PC-9 (cell line): ENCODE measurements at regions of chr1 and their contacts with region 1.

Region 1: DNA sequence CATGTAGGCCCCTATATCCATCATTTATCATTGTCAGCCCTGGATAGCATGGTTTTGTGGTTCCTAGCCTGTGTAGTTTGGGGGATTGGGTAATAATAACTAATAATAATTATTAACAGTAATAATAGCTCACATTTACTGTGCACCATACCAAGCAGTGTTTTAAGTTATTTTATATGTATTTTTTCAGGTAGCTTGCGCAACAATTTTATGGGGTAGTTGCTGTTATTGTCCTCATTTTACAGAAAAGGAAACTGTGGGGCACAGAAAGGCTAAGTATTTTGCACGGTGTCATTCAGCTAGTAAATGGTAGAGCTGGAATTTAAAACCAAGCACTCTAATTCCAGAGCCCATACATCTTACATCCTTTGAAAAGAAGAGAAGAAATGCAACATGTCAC is 179.8 kb downstream of the HS2ST1 start:
- DNase-seq: no peak
- H3K4me3 ChIP-seq: no peak overlapping the region
- H3K27ac ChIP-seq: no peak overlapping the region
- H3K4me1 ChIP-seq: peaks cover 21% of the 10 kb centered on the region
- H3K27me3 ChIP-seq: no peaks in the 10 kb centered on the region
- CTCF ChIP-seq: no peak

Region 2: GRCh38 chr1:86798608-86799291 is 295.5 kb before region 1 on chr1:
- CTCF ChIA-PET with region 1: no interaction called
- POLR2A ChIA-PET with region 1: no interaction called
- intact Hi-C with region 1: no loop called
- DNase-seq: no peak
- H3K4me3 ChIP-seq: no peak overlapping the region
- H3K27ac ChIP-seq: no peak overlapping the region
- H3K4me1 ChIP-seq: peaks cover 3% of the 10 kb centered on the region; the same call in 1 of the 2 replicates
- H3K27me3 ChIP-seq: no peaks in the 10 kb centered on the region
- CTCF ChIP-seq: no peak

Region 3: DNA sequence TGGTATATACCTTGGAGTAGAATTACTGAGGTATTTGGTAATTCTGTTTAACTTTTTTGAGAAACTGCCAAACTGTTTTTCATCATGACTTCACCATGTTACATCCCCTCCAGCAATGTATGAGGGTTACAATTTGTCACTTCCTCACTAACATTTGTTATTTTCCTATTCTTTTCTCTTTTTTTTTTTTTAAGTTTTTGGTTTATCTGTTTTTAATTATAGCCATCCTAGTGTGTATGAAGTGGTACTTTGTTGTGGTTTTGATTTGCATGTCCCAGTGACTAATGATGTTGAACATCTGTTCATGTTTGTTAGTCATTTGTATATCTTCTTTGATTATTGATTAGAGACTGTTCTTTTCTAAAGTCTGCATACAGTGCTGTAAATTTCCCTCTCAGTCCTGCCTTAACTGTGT is 32.5 kb before region 1 on chr1:
- CTCF ChIA-PET with region 1: no interaction called
- POLR2A ChIA-PET with region 1: no interaction called
- intact Hi-C with region 1: no loop called
- DNase-seq: no peak
- H3K4me3 ChIP-seq: no peak overlapping the region
- H3K27ac ChIP-seq: no peak overlapping the region
- H3K4me1 ChIP-seq: 0 out of 2 replicates have a peak, but pooled peaks cover 6% of the 10 kb centered on the region
- H3K27me3 ChIP-seq: no peaks in the 10 kb centered on the region
- CTCF ChIP-seq: no peak

Region 4: GRCh38 chr1:87120779-87121178 is 26.5 kb after region 1 on chr1:
- CTCF ChIA-PET with region 1: no interaction called
- POLR2A ChIA-PET with region 1: no interaction called
- intact Hi-C with region 1: no loop called
- DNase-seq: no peak
- H3K4me3 ChIP-seq: no peak overlapping the region
- H3K27ac ChIP-seq: no peak overlapping the region
- H3K4me1 ChIP-seq: peaks cover 10% of the 10 kb centered on the region
- H3K27me3 ChIP-seq: no peaks in the 10 kb centered on the region
- CTCF ChIP-seq: peak; percentile 45; the same call in 1 of the 2 replicates

Region 5: DNA sequence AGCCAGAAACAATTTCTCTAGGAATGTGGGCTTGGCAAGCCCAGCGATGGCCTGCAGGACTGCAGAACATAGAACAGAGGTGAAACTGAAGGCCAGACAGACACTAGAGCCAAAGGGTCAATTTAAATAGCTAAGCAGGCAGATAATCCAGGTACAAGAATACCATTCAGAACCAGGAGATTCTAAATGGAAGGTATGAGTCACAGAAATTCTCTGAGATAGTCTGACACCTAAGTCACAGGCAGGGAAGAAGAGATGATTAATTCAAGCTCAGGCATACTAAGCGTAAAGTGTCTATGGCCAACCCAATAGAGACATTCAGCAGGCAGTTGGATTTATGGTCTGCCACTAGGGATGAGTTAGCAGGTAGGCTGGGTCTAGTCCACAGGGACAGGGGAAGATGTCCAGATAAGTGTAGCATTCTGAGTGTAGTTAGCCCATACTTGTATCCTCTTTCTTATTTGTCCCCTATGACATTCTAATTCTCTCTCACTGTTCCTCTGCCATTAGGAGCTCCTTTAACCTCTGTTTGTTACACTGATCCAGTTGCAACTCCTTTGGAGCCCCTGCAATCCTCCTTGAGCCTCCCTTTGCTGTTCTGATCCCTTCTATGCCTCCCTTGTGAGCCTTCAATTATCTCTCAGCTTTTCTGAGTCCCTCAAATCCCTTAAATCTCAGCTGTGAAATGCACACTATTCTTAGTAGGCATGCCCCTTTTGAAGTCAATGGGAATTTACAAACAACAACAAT is 618.2 kb after region 1 on chr1:
- CTCF ChIA-PET with region 1: no interaction called
- POLR2A ChIA-PET with region 1: no interaction called
- intact Hi-C with region 1: no loop called
- DNase-seq: peak in 1 of 2 experiments; percentile 7
- H3K4me3 ChIP-seq: no peak overlapping the region
- H3K27ac ChIP-seq: no peak overlapping the region
- H3K4me1 ChIP-seq: no peaks in the 10 kb centered on the region
- H3K27me3 ChIP-seq: no peaks in the 10 kb centered on the region
- CTCF ChIP-seq: no peak

Region 6: DNA sequence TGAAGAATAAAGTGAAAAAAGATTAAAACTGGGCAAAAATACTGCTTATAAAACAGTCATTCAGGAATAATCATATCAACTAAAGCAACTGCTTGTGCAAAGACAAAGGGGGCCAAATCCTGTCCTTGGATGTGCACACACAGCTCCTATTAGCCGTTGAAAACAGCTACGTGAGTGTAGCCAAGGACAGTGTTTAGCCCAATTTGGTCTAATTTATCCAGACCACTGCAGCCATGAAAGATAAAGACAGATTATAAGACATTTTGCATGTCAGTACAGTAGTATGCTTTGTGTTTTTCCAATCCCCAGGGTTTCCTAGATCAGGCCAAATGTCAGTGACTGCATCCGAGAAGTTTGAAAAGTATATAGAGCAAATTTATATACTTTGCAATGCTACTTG is 1443.5 kb after region 1 on chr1:
- CTCF ChIA-PET with region 1: interaction called, 11 read pairs
- POLR2A ChIA-PET with region 1: no interaction called
- intact Hi-C with region 1: no loop called
- DNase-seq: no peak
- H3K4me3 ChIP-seq: no peak overlapping the region
- H3K27ac ChIP-seq: no peak overlapping the region
- H3K4me1 ChIP-seq: no peaks in the 10 kb centered on the region
- H3K27me3 ChIP-seq: no peaks in the 10 kb centered on the region
- CTCF ChIP-seq: no peak